ENCODE measurements at regions of chr4 and their contacts with region 1.

Region 1: GRCh38 chr4:52721968-52722815 is 29.0 kb downstream of the ERVMER34-1 start:
- DNase-seq: peak; percentile 93 to 96
- H3K4me3 ChIP-seq: peak overlapping the region; percentile 55
- H3K4me3 Mint-ChIP-seq: peak overlapping the region; percentile 70
- H3K27ac Mint-ChIP-seq: peak overlapping the region; percentile 26
- H3K4me1 ChIP-seq: 0 out of 2 replicates have a peak, but pooled peaks cover 3% of the 10 kb centered on the region
- H3K4me1 Mint-ChIP-seq: peaks cover 7% of the 10 kb centered on the region
- H3K27me3 ChIP-seq: no peaks in the 10 kb centered on the region
- H3K27me3 Mint-ChIP-seq: no peaks in the 10 kb centered on the region
- CTCF ChIP-seq: no peak

Region 2: DNA sequence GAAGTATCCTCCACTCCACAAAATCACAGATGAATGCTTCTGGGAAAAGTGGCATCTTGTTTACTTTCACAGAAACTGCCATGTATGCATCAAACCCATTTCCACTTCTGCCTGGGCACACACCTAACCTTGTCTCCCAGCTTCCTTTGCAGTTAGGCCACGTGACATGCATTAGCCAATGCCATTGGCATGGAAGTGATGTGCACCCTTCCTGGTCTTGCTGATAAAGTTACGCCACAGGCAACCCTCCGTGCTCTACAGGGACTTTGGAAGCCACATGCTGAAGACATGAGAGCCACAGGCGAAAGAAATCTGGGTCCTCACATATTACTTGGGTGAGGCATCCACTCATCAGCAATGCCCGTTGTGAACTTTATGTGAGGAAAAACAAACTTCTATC is 186.4 kb before region 1 on chr4:
- CTCF ChIA-PET with region 1: no interaction called
- POLR2A ChIA-PET with region 1: no interaction called
- intact Hi-C with region 1: no loop called
- DNase-seq: no peak
- H3K4me3 ChIP-seq: no peak overlapping the region
- H3K4me3 Mint-ChIP-seq: no peak overlapping the region
- H3K27ac Mint-ChIP-seq: no peak overlapping the region
- H3K4me1 ChIP-seq: no peaks in the 10 kb centered on the region
- H3K4me1 Mint-ChIP-seq: no peaks in the 10 kb centered on the region
- H3K27me3 ChIP-seq: no peaks in the 10 kb centered on the region
- H3K27me3 Mint-ChIP-seq: peaks cover 13% of the 10 kb centered on the region
- CTCF ChIP-seq: no peak

Region 3: GRCh38 chr4:52743444-52744019 is 21.3 kb after region 1 on chr4:
- CTCF ChIA-PET with region 1: no interaction called
- POLR2A ChIA-PET with region 1: interaction called, 10 read pairs
- intact Hi-C with region 1: loop called (anchors 1 kb)
- DNase-seq: peak; percentile 62 to 68
- H3K4me3 ChIP-seq: no peak overlapping the region
- H3K4me3 Mint-ChIP-seq: peak overlapping the region; percentile 32
- H3K27ac Mint-ChIP-seq: peak overlapping the region; percentile 78
- H3K4me1 ChIP-seq: peaks cover 35% of the 10 kb centered on the region
- H3K4me1 Mint-ChIP-seq: peaks cover 30% of the 10 kb centered on the region
- H3K27me3 ChIP-seq: no peaks in the 10 kb centered on the region
- H3K27me3 Mint-ChIP-seq: no peaks in the 10 kb centered on the region
- CTCF ChIP-seq: no peak

Region 4: DNA sequence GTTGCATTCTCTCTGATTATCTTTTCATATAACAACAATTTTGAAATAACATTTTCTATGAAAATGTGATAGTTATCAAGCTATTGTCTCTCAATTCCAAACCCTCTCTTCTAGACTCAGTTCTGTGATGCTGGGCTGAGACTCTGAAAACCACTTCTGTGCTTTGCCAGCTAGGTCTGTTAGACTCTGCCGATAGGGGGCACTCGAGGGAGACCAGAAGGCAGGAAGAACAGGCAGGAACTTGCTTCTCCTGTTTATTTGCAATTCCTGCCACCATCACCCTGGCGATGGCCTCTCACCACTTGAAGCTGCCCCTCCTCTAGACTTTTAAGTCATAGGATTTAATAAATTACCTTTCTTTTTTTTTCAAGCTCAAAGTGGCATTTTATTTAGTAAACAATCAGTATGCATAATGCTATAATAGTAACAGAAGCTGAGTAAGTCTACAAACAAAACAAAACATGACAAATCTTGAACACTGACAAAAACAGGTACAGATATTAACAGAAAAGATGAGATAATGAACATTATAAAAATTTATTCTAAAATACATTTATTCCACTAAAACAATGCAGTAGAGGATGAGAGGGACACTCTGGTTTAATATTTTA is 189.6 kb after region 1 on chr4:
- CTCF ChIA-PET with region 1: no interaction called
- POLR2A ChIA-PET with region 1: interaction called, 6 read pairs
- intact Hi-C with region 1: loop called (anchors 5 kb)
- DNase-seq: peak; percentile 80 to 82
- H3K4me3 ChIP-seq: no peak overlapping the region
- H3K4me3 Mint-ChIP-seq: no peak overlapping the region
- H3K27ac Mint-ChIP-seq: peak overlapping the region; percentile 39
- H3K4me1 ChIP-seq: peaks cover 58% of the 10 kb centered on the region
- H3K4me1 Mint-ChIP-seq: peaks cover 25% of the 10 kb centered on the region
- H3K27me3 ChIP-seq: no peaks in the 10 kb centered on the region
- H3K27me3 Mint-ChIP-seq: no peaks in the 10 kb centered on the region
- CTCF ChIP-seq: peak; percentile 52 to 67